CD4-positive, alpha-beta T cell (primary cell): ENCODE measurements at regions of chr16 and their contacts with region 1.

Region 1: GRCh38 chr16:87950765-87951549 is at the start of gene BANP:
- DNase-seq: peak; percentile 92 to 99 (median 96)
- ATAC-seq: peak; percentile 92
- H3K4me3 ChIP-seq: peak within 1 kb of the TSS; percentile 92
- H3K4me3 Mint-ChIP-seq: peak within 1 kb of the TSS; percentile 100
- H3K27ac ChIP-seq: peak within 1 kb of the TSS; percentile 88 to 98
- H3K27ac Mint-ChIP-seq: peak within 1 kb of the TSS; percentile 99
- H3K4me1 ChIP-seq: peaks cover 55% of the 10 kb centered on the region
- H3K4me1 Mint-ChIP-seq: peaks cover 42% of the 10 kb centered on the region
- H3K27me3 ChIP-seq: no peaks in the 10 kb centered on the region
- H3K27me3 Mint-ChIP-seq: no peaks in the 10 kb centered on the region
- CTCF ChIP-seq: peak; percentile 31
- total RNA-seq, gene BANP: 57.5 to 58.6 TPM

Region 2: DNA sequence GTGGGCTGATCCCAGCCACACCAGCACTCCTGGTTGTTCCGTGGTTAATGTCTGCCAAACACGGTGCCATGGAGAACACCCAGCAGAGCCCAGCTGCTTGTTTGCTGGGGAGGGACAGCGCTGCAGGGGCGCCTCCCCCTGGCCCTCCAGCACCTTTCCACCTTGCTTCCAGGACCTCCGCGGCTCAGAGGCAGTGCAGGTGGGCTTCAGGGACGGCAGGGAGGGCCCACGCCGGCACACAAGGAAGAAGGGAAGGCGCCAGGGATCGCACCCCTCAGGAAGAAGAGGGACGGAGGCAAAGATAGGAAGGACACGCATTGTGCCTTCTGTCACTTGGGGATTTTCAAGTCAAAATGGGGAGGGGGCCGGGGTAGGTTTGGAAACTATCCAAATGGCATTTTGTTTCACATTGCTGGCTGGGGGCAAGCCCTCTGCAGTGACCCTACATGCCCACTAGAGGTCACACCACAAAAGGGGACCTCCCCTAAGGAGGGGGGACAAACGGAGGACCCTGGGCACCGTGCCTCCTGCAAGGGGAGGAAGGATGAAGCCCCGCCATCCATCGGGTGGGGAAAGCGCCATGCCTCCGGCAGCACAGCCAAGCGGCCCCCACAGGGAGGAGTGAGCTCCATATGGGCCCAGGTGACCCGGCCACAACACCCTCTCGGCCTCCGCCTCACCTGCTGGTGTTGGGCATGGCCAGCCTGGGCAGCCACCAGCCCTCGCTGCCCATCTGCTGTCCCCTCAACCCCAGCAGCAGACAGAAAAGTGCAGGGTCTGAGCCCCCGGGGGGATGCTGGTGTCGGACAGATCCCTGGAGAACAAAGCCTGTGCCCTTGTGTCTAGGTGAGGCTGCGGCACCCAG is 626.3 kb before region 1 on chr16:
- CTCF ChIA-PET with region 1: no interaction called
- POLR2A ChIA-PET with region 1: interaction called, 5 read pairs
- intact Hi-C with region 1: loop called in 1 of 2 experiments (anchors 10 kb)
- DNase-seq: peak; percentile 20 to 73 (median 39)
- ATAC-seq: peak; percentile 96
- H3K4me3 ChIP-seq: no peak overlapping the region
- H3K4me3 Mint-ChIP-seq: no peak overlapping the region
- H3K27ac ChIP-seq: no peak overlapping the region
- H3K27ac Mint-ChIP-seq: no peak overlapping the region
- H3K4me1 ChIP-seq: peaks cover 6% of the 10 kb centered on the region
- H3K4me1 Mint-ChIP-seq: no peaks in the 10 kb centered on the region
- H3K27me3 ChIP-seq: no peaks in the 10 kb centered on the region
- H3K27me3 Mint-ChIP-seq: no peaks in the 10 kb centered on the region
- CTCF ChIP-seq: peak; percentile 87

Region 3: DNA sequence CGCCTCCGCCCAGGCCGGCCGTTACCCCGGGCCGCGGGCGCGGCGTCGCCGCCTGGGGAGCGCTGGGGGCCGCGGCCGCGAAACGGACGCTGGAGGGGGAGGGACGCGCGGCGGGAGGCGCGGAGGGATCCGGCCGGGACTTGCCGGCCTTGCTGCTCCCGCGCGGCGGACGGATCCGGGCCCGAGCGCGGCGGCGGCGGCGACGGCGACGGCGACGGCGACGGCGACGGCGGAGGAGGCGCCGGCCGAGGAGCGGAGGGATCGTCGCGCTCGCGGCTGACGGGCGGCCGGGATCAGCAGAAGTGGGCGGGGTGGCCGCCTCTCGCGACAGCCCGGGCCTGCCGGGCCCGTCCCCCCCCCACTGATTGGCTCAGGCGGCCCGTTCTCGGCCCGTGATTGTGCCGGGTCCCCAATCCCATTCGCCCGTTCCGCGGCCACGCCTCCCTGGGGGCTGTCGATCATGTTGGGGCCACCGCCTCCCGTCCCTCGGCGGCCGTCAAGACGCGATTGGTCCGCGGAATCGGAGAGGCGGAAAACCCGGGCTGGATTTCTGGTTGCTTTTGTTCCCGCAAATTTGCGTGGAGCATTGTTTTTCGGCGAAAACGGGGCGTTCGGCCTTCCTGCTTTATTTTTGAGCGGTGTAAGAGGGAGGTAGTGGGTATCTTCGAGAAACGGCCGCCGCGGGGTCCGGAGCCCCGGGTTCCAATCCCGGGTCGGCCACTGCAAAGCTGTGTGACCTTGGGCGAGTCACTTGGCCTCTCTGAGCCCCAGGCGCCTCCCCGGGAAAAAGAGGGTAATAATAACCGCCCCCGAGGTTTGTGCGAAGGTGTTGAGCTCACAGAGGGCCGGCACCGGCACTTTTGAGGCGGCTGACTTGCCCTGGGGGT is 458.0 kb before region 1 on chr16 and contains the start of gene ZCCHC14:
- CTCF ChIA-PET with region 1: no interaction called
- POLR2A ChIA-PET with region 1: no interaction called
- intact Hi-C with region 1: loop called in 1 of 2 experiments (anchors 5 kb)
- DNase-seq: peak; percentile 98 to 99 (median 99)
- ATAC-seq: peak; percentile 91
- H3K4me3 ChIP-seq: peak within 1 kb of the TSS; percentile 61
- H3K4me3 Mint-ChIP-seq: peak within 1 kb of the TSS; percentile 94
- H3K27ac ChIP-seq: no peak within 1 kb of the TSS
- H3K27ac Mint-ChIP-seq: peak within 1 kb of the TSS; percentile 81
- H3K4me1 ChIP-seq: peaks cover 54% of the 10 kb centered on the region
- H3K4me1 Mint-ChIP-seq: peaks cover 47% of the 10 kb centered on the region
- H3K27me3 ChIP-seq: peaks cover 0 to 3% of the 10 kb centered on the region in 2 experiments
- H3K27me3 Mint-ChIP-seq: no peaks in the 10 kb centered on the region
- CTCF ChIP-seq: no peak
- total RNA-seq, gene ZCCHC14: 16.4 to 18.3 TPM

Region 4: DNA sequence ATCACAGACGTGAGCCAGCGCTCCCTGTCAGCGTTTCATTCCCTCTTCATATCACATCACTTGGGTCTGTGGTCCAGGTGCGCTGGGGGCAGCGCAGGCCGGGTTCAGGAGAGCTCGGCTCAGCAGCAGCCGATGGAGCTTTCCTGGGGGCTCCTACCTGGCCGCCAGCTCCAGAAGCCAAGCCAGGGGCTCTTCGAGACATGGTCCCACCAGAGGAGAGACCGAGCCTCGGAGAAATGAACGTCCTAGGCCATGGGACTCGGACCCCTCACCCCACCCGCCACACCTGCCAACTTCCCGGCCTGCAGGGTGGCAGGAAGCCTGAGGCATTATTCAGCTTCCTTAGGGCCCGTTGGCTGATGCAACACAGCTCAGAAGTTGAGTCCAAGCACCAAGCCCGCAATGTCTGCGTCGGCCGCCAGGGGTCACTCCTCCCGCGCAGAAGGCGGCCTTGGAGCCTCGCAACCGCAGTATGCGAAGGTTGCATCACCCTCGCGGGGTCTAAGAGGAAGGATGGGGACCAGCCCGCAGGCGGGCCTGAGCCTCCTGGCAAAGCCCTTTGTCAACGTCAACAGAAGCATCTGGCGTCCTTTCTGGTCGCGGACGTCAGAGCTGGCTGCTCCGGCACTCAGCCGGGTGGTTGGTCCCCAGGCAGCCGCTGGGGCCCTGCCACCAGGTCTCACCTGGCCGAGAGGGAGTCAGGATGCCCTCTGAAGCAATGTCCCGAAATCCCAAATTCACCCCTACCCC is 172.0 kb before region 1 on chr16:
- CTCF ChIA-PET with region 1: interaction called, 5 read pairs
- POLR2A ChIA-PET with region 1: interaction called, 3 read pairs
- intact Hi-C with region 1: loop called in 1 of 2 experiments (anchors 5 kb)
- DNase-seq: peak; percentile 87 to 96 (median 91)
- ATAC-seq: peak; percentile 82
- H3K4me3 ChIP-seq: no peak overlapping the region
- H3K4me3 Mint-ChIP-seq: peak overlapping the region; percentile 66
- H3K27ac ChIP-seq: no peak overlapping the region
- H3K27ac Mint-ChIP-seq: peak overlapping the region; percentile 87
- H3K4me1 ChIP-seq: peaks cover 43% of the 10 kb centered on the region
- H3K4me1 Mint-ChIP-seq: peaks cover 38% of the 10 kb centered on the region
- H3K27me3 ChIP-seq: no peaks in the 10 kb centered on the region
- H3K27me3 Mint-ChIP-seq: no peaks in the 10 kb centered on the region
- CTCF ChIP-seq: peak; percentile 93

Region 5: DNA sequence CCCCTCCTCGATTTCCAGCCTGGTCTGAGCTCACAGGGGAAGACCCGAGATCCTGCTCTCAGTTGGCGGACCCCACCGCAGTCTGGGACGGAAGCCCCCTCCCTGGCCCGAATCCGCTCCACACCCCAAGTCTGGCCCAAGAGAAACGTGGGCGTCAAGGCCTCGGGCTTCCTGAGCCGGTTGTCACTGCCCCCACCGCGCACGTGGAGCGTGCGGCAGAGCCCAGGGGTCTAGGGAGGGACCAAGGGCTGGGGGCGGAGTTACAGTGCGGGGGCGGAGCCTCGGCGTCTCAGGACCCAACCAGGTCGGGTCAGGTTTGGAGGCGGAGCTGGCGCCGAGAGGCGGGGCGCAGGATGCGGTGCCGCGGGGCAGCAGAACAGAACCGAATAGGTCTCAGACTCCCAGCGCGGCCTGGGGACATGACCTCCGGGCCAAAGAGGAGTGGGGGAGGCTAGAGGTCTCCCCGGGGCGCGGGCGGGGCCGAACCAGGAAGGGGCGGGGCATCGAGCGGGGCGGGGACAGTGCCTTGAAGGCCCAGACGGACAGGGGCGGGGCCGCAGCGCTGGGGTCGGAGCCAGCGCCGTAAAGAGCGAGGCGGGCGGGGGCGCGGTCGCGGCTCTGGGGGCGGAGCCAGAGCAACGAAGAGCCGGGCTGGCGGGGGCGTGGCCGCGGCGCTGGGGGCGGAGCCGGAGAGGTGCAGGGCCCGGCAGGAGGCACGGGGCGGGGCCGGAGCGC is 501.7 kb after region 1 on chr16:
- CTCF ChIA-PET with region 1: no interaction called
- POLR2A ChIA-PET with region 1: interaction called, 5 read pairs
- intact Hi-C with region 1: loop called in 1 of 2 experiments (anchors 5 kb)
- DNase-seq: peak; percentile 95 to 100 (median 99)
- ATAC-seq: peak; percentile 71
- H3K4me3 ChIP-seq: peak overlapping the region; percentile 65
- H3K4me3 Mint-ChIP-seq: peak overlapping the region; percentile 90
- H3K27ac ChIP-seq: peak overlapping the region in 1 of 2 donors; percentile 48
- H3K27ac Mint-ChIP-seq: peak overlapping the region; percentile 90
- H3K4me1 ChIP-seq: peaks cover 43% of the 10 kb centered on the region
- H3K4me1 Mint-ChIP-seq: peaks cover 24% of the 10 kb centered on the region
- H3K27me3 ChIP-seq: no peaks in the 10 kb centered on the region
- H3K27me3 Mint-ChIP-seq: no peaks in the 10 kb centered on the region
- CTCF ChIP-seq: no peak

Region 6: GRCh38 chr16:88569985-88570690 is 619.2 kb after region 1 on chr16 and contains the start of gene ZC3H18:
- CTCF ChIA-PET with region 1: no interaction called
- POLR2A ChIA-PET with region 1: interaction called, 9 read pairs
- intact Hi-C with region 1: loop called in 1 of 2 experiments (anchors 10 kb)
- DNase-seq: peak; percentile 93 to 100 (median 98)
- ATAC-seq: peak; percentile 93
- H3K4me3 ChIP-seq: peak within 1 kb of the TSS; percentile 65
- H3K4me3 Mint-ChIP-seq: peak within 1 kb of the TSS; percentile 88
- H3K27ac ChIP-seq: peak within 1 kb of the TSS; percentile 75 to 78
- H3K27ac Mint-ChIP-seq: peak within 1 kb of the TSS; percentile 87
- H3K4me1 ChIP-seq: peaks cover 31% of the 10 kb centered on the region
- H3K4me1 Mint-ChIP-seq: peaks cover 33% of the 10 kb centered on the region
- H3K27me3 ChIP-seq: no peaks in the 10 kb centered on the region
- H3K27me3 Mint-ChIP-seq: no peaks in the 10 kb centered on the region
- CTCF ChIP-seq: no peak
- total RNA-seq, gene ZC3H18: 92.6 to 93.7 TPM